ENCODE measurements at regions of chr1 and their contacts with region 1.

Region 1: GRCh38 chr1:183915625-183916510 is 110.9 kb downstream of the RGL1 start:
- DNase-seq: peak; percentile 82
- ATAC-seq: peak; percentile 97
- H3K4me3 Mint-ChIP-seq: no peak overlapping the region
- H3K27ac Mint-ChIP-seq: no peak overlapping the region
- H3K4me1 Mint-ChIP-seq: peaks cover 8% of the 10 kb centered on the region
- H3K27me3 Mint-ChIP-seq: no peaks in the 10 kb centered on the region

Region 2: DNA sequence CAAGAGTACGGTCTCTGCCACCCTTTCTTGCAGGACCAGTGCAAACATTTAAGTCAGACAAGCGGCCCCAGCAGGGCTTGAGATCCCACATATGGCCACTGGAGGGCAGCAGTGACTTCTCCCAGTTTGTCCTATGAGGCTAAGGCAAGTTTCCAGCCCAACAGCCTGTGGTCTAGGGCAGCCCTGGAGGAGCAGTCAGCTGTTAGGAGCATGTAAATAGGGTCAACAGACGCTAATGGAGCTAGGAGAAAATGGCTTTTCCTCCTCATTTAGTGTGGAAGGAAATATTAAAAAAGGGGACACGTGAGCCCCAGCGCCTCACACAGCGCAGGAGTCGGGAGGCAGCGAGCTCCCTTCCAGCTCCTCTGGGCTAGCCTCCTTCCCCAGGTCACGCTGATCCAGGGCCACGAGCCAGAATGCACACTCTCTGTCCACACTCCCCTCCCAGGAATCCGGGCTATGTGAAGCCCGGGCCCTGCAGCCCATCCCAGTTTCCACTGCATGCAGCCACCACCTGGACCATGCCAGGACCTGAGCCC is 634.2 kb before region 1 on chr1:
- CTCF ChIA-PET with region 1: interaction called, 11 read pairs
- POLR2A ChIA-PET with region 1: no interaction called
- DNase-seq: peak; percentile 80
- ATAC-seq: peak; percentile 83
- H3K4me3 Mint-ChIP-seq: no peak overlapping the region
- H3K27ac Mint-ChIP-seq: no peak overlapping the region
- H3K4me1 Mint-ChIP-seq: peaks cover 3% of the 10 kb centered on the region
- H3K27me3 Mint-ChIP-seq: no peaks in the 10 kb centered on the region

Region 3: GRCh38 chr1:183646776-183647175 is 269.1 kb before region 1 on chr1:
- CTCF ChIA-PET with region 1: interaction called, 188 read pairs
- POLR2A ChIA-PET with region 1: no interaction called
- DNase-seq: no peak
- ATAC-seq: no peak
- H3K4me3 Mint-ChIP-seq: no peak overlapping the region
- H3K27ac Mint-ChIP-seq: no peak overlapping the region
- H3K4me1 Mint-ChIP-seq: peaks cover 7% of the 10 kb centered on the region
- H3K27me3 Mint-ChIP-seq: no peaks in the 10 kb centered on the region

Region 4: DNA sequence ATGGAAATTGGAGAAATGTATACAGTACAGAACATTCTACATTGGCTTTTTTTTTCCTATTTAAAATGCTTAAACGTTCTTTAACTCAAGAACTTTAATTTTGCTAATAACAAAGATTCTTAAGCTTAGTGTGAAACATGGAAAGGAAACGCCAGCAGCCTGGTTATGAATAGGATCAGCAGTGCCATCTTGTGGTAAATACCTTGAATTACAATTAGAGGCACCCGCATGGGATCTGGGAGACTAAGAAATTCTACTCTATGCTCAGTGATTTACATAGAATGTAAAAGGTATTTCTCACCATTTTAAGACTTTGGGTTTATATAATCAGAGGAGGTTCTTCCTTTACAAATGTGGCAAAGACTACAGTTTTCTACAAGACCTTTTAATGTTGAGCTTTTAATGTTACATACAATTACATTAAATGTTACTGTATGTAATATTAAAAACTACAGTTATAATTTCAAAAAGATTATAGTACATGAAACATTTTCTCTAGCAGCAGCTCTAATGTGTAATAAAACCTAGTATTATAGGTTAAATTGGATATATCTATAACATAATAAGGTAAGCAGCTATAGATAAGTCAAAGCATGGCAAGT is 230.7 kb before region 1 on chr1:
- CTCF ChIA-PET with region 1: interaction called, 47 read pairs
- POLR2A ChIA-PET with region 1: no interaction called
- DNase-seq: peak; percentile 46
- ATAC-seq: peak; percentile 60
- H3K4me3 Mint-ChIP-seq: no peak overlapping the region
- H3K27ac Mint-ChIP-seq: no peak overlapping the region
- H3K4me1 Mint-ChIP-seq: no peaks in the 10 kb centered on the region
- H3K27me3 Mint-ChIP-seq: peaks cover 28% of the 10 kb centered on the region

Region 5: GRCh38 chr1:183898001-183898396 is 17.9 kb before region 1 on chr1:
- CTCF ChIA-PET with region 1: interaction called, 16 read pairs
- POLR2A ChIA-PET with region 1: no interaction called
- DNase-seq: no peak
- ATAC-seq: no peak
- H3K4me3 Mint-ChIP-seq: no peak overlapping the region
- H3K27ac Mint-ChIP-seq: no peak overlapping the region
- H3K4me1 Mint-ChIP-seq: peaks cover 13% of the 10 kb centered on the region
- H3K27me3 Mint-ChIP-seq: peaks cover 2% of the 10 kb centered on the region

Region 6: GRCh38 chr1:183932412-183932811 is 16.5 kb after region 1 on chr1:
- CTCF ChIA-PET with region 1: interaction called, 22 read pairs
- POLR2A ChIA-PET with region 1: no interaction called
- DNase-seq: no peak
- ATAC-seq: no peak
- H3K4me3 Mint-ChIP-seq: no peak overlapping the region
- H3K27ac Mint-ChIP-seq: no peak overlapping the region
- H3K4me1 Mint-ChIP-seq: no peaks in the 10 kb centered on the region
- H3K27me3 Mint-ChIP-seq: no peaks in the 10 kb centered on the region

Region 7: DNA sequence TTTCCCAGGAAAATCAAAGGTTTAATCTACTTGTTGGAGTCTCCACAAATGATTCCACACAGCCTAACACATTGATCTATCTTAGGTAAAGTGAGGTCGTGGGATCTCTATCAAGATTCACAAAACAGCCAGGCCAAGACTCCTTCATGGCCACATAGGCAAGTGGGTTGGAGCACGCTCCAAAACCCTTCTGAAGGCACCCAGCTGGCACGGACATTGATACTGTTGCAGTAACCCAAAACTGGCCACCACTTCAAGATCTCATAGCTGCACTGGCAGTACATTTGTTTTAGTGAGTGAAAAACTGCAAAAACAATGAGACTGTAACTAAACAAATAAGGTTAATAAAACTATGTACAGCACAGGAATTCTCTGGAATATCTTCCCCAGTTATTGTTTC is 59.8 kb after region 1 on chr1:
- CTCF ChIA-PET with region 1: no interaction called
- POLR2A ChIA-PET with region 1: no interaction called
- DNase-seq: no peak
- ATAC-seq: no peak
- H3K4me3 Mint-ChIP-seq: no peak overlapping the region
- H3K27ac Mint-ChIP-seq: no peak overlapping the region
- H3K4me1 Mint-ChIP-seq: no peaks in the 10 kb centered on the region
- H3K27me3 Mint-ChIP-seq: peaks cover 2% of the 10 kb centered on the region

Measured in activated CD8-positive, alpha-beta T cell treated with anti-CD3 and anti-CD28 coated beads, Interleukin-2, amount 10 ng/mL, durations not matched to agents 7 days and 5 days (primary cell).